Panc1 (cell line): ENCODE measurements at regions of chr4 and their contacts with region 1.

Region 1: GRCh38 chr4:99998062-99998867 is 48.2 kb upstream of the H2AZ1 start:
- DNase-seq: no peak
- ATAC-seq: no peak
- H3K4me3 ChIP-seq: no peak overlapping the region
- H3K27ac ChIP-seq: no peak overlapping the region
- H3K4me1 ChIP-seq: no peaks in the 10 kb centered on the region
- H3K27me3 ChIP-seq: no peaks in the 10 kb centered on the region
- CTCF ChIP-seq: peak; percentile 21; the same call in 1 of the 2 replicates

Region 2: GRCh38 chr4:100095729-100096595 is 97.7 kb after region 1 on chr4:
- CTCF ChIA-PET with region 1: interaction called, 3 read pairs
- POLR2A ChIA-PET with region 1: no interaction called
- in situ Hi-C with region 1: no loop called
- intact Hi-C with region 1: loop called (anchors 5 kb)
- DNase-seq: peak; percentile 13
- ATAC-seq: peak; percentile 92
- H3K4me3 ChIP-seq: no peak overlapping the region
- H3K27ac ChIP-seq: no peak overlapping the region
- H3K4me1 ChIP-seq: no peaks in the 10 kb centered on the region
- H3K27me3 ChIP-seq: no peaks in the 10 kb centered on the region
- CTCF ChIP-seq: peak; percentile 75

Region 3: DNA sequence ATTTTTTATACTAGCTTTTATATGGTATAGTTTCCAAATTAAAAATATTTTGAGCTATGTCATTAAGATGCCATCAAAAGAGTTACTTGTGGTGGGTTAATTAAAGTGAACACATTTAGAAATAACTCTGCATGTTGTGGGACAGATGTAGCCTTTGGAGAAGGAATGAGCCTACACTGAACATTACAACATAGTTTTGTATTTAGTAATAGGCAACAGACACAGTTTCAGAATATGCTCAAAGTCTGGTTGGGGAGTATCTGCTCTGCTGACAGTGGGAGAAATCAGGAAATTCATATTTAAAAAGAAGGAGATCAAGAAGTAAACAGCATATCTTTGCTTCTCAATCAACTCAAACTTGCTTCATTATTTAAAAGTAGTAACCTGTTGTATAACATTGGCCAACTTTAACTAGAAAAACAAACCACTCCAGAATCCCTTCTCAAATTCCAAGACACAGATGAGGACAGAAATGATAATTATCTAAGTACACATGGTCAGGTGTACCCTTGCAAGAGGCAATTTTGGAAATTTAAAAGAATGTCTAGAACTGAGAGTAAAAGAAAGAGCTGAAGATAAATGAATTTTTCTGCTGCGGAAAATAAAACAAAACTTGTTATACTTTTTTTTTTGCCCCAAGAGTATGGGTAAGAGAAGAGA is 496.0 kb after region 1 on chr4:
- CTCF ChIA-PET with region 1: no interaction called
- POLR2A ChIA-PET with region 1: no interaction called
- in situ Hi-C with region 1: no loop called
- intact Hi-C with region 1: no loop called
- DNase-seq: no peak
- ATAC-seq: no peak
- H3K4me3 ChIP-seq: no peak overlapping the region
- H3K27ac ChIP-seq: no peak overlapping the region
- H3K4me1 ChIP-seq: no peaks in the 10 kb centered on the region
- H3K27me3 ChIP-seq: no peaks in the 10 kb centered on the region
- CTCF ChIP-seq: no peak